Gastrocnemius medialis (tissue), 4 donors: ENCODE measurements at regions of chr5 and their contacts with region 1.

Region 1: GRCh38 chr5:217860-218456 is at the starts of genes CCDC127 and SDHA:
- DNase-seq: peak; percentile 94 to 96
- ATAC-seq: peak; percentile 84 to 87
- H3K4me3 ChIP-seq: peak within 1 kb of the TSS; percentile 93 to 97 (median 95)
- H3K27ac ChIP-seq: peak within 1 kb of the TSS; percentile 97 to 99 (median 98)
- H3K4me1 ChIP-seq: peaks cover 40 to 45% of the 10 kb centered on the region in 2 donors
- H3K27me3 ChIP-seq: no peaks in the 10 kb centered on the region
- CTCF ChIP-seq: peak in 3 of 5 experiments; percentile 38 to 58 (median 39)
- POLR2A ChIP-seq: peak; percentile 98
- total RNA-seq, gene CCDC127: 5.7 to 11.1 (median 7.8) TPM
- total RNA-seq, gene SDHA: 146 to 277 (median 207) TPM

Region 2: GRCh38 chr5:159441-160172 is 58.4 kb before region 1 on chr5:
- in situ Hi-C with region 1: no loop called
- intact Hi-C with region 1: no loop called
- DNase-seq: no peak
- ATAC-seq: no peak
- H3K4me3 ChIP-seq: no peak overlapping the region
- H3K27ac ChIP-seq: no peak overlapping the region
- H3K4me1 ChIP-seq: no peaks in the 10 kb centered on the region
- H3K27me3 ChIP-seq: peaks cover 0 to 10% (median 7%) of the 10 kb centered on the region in 3 donors
- CTCF ChIP-seq: no peak
- POLR2A ChIP-seq: no peak

Region 3: GRCh38 chr5:188488-189481 is 29.2 kb before region 1 on chr5:
- in situ Hi-C with region 1: no loop called
- intact Hi-C with region 1: loop called (anchors 1 kb)
- DNase-seq: peak; percentile 84 to 91
- ATAC-seq: peak; percentile 53 to 62
- H3K4me3 ChIP-seq: peak overlapping the region; percentile 35 to 58 (median 41)
- H3K27ac ChIP-seq: peak overlapping the region; percentile 95 to 100 (median 99)
- H3K4me1 ChIP-seq: peaks cover 53 to 59% of the 10 kb centered on the region in 2 donors
- H3K27me3 ChIP-seq: no peaks in the 10 kb centered on the region
- CTCF ChIP-seq: peak; percentile 94 to 98 (median 98)
- POLR2A ChIP-seq: peak in 1 of 2 donors; percentile 41

Region 4: GRCh38 chr5:270340-270739 is 52.4 kb after region 1 on chr5:
- in situ Hi-C with region 1: no loop called
- intact Hi-C with region 1: loop called (anchors 1 kb)
- DNase-seq: no peak
- ATAC-seq: no peak
- H3K4me3 ChIP-seq: peak overlapping the region in 1 of 4 donors; percentile 69
- H3K27ac ChIP-seq: peak overlapping the region in 3 of 4 donors; percentile 79 to 92 (median 90)
- H3K4me1 ChIP-seq: peaks cover 5 to 10% of the 10 kb centered on the region in 2 donors
- H3K27me3 ChIP-seq: no peaks in the 10 kb centered on the region
- CTCF ChIP-seq: no peak
- POLR2A ChIP-seq: no peak

Region 5: DNA sequence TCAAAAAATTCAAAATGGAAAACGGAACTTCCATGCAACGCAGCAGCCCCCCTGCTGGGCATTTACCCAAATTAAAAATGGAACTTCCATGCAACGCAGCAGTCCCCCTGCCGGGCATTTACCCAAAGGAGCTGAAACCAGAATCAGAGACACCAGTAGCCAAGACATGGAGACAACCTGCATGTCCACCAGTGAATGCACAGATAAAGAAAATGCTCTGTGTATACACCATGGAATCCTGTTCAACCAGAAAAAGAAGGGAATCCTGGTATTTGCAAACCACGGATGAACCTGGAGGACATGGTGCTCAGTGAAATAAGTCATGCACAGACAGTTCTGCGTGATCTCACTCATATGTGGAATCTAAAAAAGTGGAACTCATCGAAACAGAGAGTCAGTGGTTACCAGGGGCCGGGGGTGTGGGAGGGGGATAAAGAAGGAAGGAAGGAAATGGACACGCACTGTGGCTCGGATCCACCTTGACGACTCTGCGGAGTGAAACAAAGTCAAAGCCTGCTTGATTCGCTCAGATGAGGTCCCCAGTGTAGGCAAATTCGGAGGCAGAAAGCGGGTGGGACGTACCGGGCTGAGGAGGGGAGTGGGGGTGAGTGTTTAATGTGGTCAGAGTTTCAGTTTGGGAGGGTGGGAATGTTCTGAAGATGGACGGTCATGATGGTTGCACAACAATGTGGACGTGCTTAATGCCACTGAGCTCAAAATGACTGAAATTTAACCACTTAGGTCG is 184.8 kb after region 1 on chr5:
- in situ Hi-C with region 1: no loop called
- intact Hi-C with region 1: no loop called
- DNase-seq: no peak
- ATAC-seq: no peak
- H3K4me3 ChIP-seq: no peak overlapping the region
- H3K27ac ChIP-seq: no peak overlapping the region
- H3K4me1 ChIP-seq: peaks cover 3 to 7% of the 10 kb centered on the region in 2 donors
- H3K27me3 ChIP-seq: peaks cover 17 to 43% (median 26%) of the 10 kb centered on the region in 3 donors
- CTCF ChIP-seq: no peak
- POLR2A ChIP-seq: no peak

Region 6: DNA sequence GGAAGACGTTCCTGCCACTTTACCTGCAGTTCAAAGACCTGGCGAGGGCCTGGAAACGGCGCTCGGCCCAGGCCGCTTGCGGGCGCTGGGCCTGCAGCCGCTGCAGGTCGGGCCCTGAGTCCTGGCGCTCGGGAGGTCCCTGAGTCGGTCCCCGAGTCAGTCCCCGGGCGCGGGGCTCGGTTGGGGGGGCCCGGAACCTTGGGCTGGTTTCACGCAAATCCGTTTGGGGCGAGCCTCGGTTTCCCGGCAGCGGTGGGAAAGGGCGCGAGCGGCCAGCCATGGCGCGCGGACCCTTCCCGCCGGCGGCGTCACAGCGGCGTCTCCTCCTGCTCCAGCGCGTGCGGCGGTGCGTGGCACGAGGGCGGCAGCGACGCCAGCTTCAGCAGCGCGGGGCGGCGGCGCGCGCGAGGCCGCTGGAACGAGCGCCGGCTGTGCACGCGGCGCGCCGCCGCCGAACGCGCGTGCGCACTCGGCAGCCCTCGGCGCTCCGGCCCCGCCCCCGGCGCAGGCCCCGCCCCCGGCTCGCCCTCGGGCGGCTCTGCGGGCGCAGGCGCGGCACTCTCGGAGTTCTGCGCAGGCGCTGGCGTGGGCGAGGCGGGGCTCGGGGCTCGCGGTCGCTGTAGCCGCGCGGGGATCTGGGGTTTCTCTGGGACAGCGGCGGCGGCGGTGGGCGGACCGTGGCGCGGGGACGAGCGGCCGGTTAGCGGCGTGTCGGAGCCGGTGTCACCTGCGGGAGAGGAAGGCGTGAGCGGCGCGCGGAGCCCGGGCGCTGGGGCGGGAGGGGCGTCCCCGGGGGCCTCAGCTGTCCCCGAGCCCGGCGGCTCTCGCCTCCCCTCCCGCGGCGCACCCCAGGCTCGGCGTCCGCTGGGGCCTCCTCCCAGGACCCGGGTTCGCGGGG is 254.9 kb after region 1 on chr5:
- in situ Hi-C with region 1: no loop called
- intact Hi-C with region 1: loop called (anchors 1 kb)
- DNase-seq: peak; percentile 70 to 80
- ATAC-seq: peak; percentile 85 to 88
- H3K4me3 ChIP-seq: peak overlapping the region; percentile 74 to 99 (median 92)
- H3K27ac ChIP-seq: peak overlapping the region; percentile 84 to 94 (median 90)
- H3K4me1 ChIP-seq: peaks cover 11 to 24% of the 10 kb centered on the region in 2 donors
- H3K27me3 ChIP-seq: peaks cover 28 to 34% (median 32%) of the 10 kb centered on the region in 3 donors
- CTCF ChIP-seq: peak in 1 of 5 experiments; percentile 13
- POLR2A ChIP-seq: peak; percentile 67 to 69